Pancreas (tissue), 10 donors: ENCODE measurements at regions of chr18 and their contacts with region 1.

Region 1: DNA sequence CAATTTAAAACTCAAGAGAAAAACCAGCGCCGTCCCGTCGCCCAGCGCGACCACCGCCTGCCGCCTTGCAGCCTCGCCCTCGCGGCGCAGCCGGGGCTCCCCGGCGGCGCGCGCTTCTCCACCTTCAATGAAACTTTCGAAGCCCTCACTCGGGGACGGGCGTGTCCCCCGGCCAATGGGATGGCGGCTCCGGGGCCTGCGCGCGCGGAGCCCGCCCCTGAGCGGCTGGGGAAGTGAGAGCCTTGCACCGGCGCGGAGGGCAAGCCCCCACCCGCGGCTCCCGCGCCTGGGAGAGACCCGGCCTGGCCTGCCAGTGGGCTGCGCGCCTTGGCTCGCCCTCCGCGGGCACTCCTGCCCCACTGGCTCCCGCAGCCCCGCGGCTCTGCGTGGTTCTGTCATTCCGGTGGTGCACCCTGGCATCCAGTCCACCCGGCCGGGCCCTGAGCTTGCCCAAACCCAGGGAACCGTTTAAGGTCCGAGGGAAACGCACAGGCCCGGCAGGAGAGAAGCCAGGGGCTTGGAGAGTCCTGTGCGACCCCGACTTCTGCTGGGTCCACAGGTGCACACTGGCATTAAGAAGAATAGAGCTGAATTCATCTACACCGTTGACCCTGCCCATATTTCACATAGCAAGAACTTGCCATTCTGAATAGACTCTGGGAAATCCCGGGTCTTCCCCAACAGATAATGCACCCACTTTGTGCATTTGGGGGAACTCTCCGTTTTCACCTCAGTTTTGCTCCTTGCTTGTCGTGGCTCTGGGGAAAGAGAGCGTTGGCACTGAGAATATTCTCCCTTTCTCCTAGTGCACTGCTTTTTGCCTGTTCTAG is at the start of gene PIEZO2:
- DNase-seq: peak; percentile 31 to 75 (median 44)
- ATAC-seq: peak; percentile 69 to 90 (median 83)
- H3K4me3 ChIP-seq: peak within 1 kb of the TSS in 3 of 4 donors; percentile 15 to 45 (median 36)
- H3K27ac ChIP-seq: no peak within 1 kb of the TSS
- H3K4me1 ChIP-seq: peaks cover 0 to 7% (median 0%) of the 10 kb centered on the region in 3 donors
- H3K27me3 ChIP-seq: peaks cover 0 to 17% (median 3%) of the 10 kb centered on the region in 4 donors
- CTCF ChIP-seq: no peak
- total RNA-seq, gene PIEZO2: 1.1 to 11.1 (median 3.6) TPM

Region 2: GRCh38 chr18:10560450-10561045 is 589.1 kb before region 1 on chr18:
- intact Hi-C with region 1: loop called in 1 of 3 experiments (anchors 5 kb)
- DNase-seq: peak in 5 of 6 donors; percentile 51 to 81 (median 67)
- ATAC-seq: peak; percentile 74 to 90 (median 90)
- H3K4me3 ChIP-seq: peak overlapping the region in 1 of 4 donors; percentile 17
- H3K27ac ChIP-seq: no peak overlapping the region
- H3K4me1 ChIP-seq: no peaks in the 10 kb centered on the region
- H3K27me3 ChIP-seq: no peaks in the 10 kb centered on the region
- CTCF ChIP-seq: peak; percentile 53 to 74 (median 74)

Region 3: DNA sequence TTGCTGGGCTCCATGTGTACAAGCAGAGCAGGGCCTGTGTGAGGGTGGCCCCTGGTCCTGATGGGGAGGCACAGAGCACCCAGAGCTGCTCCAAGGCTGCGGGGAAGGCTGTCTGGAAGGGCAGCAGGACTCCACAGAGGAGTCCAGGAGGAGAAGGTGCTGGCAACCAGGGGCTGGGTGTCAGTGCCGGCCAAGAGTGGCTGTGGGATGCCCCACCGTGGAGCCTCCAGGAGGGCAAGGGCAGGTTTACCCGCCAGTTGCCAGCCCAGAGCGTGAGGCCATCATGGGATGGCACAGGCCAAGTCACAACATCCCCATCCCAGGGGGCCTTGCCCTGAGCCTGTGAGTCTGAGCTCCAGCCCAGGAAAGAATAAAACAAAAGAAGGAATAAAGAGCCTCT is 382.0 kb before region 1 on chr18:
- intact Hi-C with region 1: loop called in 1 of 3 experiments (anchors 10 kb)
- DNase-seq: peak in 1 of 6 donors; percentile 33
- ATAC-seq: no peak
- H3K4me3 ChIP-seq: no peak overlapping the region
- H3K27ac ChIP-seq: no peak overlapping the region
- H3K4me1 ChIP-seq: no peaks in the 10 kb centered on the region
- H3K27me3 ChIP-seq: no peaks in the 10 kb centered on the region
- CTCF ChIP-seq: no peak

Region 4: DNA sequence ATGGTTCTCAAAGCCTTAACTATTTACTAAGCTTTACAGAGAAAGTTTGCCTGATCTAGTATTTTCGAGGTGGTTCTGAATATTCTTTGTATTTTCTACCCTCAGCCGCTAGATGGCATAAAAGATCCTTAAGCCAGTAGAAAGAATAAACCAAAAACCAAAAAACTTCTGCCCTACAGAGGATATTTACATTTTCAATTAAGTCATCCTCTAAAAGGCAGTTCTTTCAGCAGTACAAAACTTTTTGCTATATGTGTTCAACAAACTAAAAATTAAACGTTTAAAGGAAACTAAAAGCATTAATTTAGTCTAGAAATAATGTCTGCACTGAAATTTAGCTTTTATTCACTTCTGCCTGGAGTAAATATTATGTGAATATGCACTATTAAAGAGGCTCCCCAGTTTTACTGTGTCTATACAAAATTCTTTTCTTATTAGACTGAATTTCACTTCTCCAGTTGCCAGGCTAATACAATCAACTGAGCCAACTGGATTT is 297.8 kb before region 1 on chr18:
- intact Hi-C with region 1: loop called in 1 of 3 experiments (anchors 5 kb)
- DNase-seq: no peak
- ATAC-seq: peak in 3 of 4 donors; percentile 73 to 89 (median 88)
- H3K4me3 ChIP-seq: no peak overlapping the region
- H3K27ac ChIP-seq: no peak overlapping the region
- H3K4me1 ChIP-seq: no peaks in the 10 kb centered on the region
- H3K27me3 ChIP-seq: no peaks in the 10 kb centered on the region
- CTCF ChIP-seq: peak; percentile 37 to 57 (median 47)